Mammary epithelial cell (primary cell): ENCODE measurements at regions of chr9 and their contacts with region 1.

Region 1: GRCh38 chr9:108761655-108762347 is 94.0 kb downstream of the ACTL7B start:
- DNase-seq: peak; percentile 31
- H3K4me3 ChIP-seq: no peak overlapping the region
- H3K27ac ChIP-seq: no peak overlapping the region
- H3K4me1 ChIP-seq: no peaks in the 10 kb centered on the region
- H3K27me3 ChIP-seq: no peaks in the 10 kb centered on the region
- CTCF ChIP-seq: peak; percentile 86 to 95

Region 2: GRCh38 chr9:107465467-107466451 is 1296.0 kb before region 1 on chr9:
- CTCF ChIA-PET with region 1: no interaction called
- dilution Hi-C with region 1: no loop called
- in situ Hi-C with region 1: loop called in 1 of 2 experiments (anchors 25 kb)
- intact Hi-C with region 1: loop called (anchors 2 kb)
- DNase-seq: peak; percentile 50
- H3K4me3 ChIP-seq: peak overlapping the region; percentile 51 to 71 (median 59)
- H3K27ac ChIP-seq: no peak overlapping the region
- H3K4me1 ChIP-seq: peaks cover 11% of the 10 kb centered on the region
- H3K27me3 ChIP-seq: no peaks in the 10 kb centered on the region
- CTCF ChIP-seq: peak; percentile 63 to 83

Region 3: GRCh38 chr9:107484117-107484723 is 1277.6 kb before region 1 on chr9:
- CTCF ChIA-PET with region 1: no interaction called
- dilution Hi-C with region 1: loop called (anchors 5 kb)
- in situ Hi-C with region 1: no loop called
- intact Hi-C with region 1: loop called (anchors 5 kb)
- DNase-seq: peak; percentile 60
- H3K4me3 ChIP-seq: no peak overlapping the region
- H3K27ac ChIP-seq: no peak overlapping the region
- H3K4me1 ChIP-seq: peaks cover 27% of the 10 kb centered on the region
- H3K27me3 ChIP-seq: no peaks in the 10 kb centered on the region
- CTCF ChIP-seq: peak; percentile 34 to 63

Region 4: DNA sequence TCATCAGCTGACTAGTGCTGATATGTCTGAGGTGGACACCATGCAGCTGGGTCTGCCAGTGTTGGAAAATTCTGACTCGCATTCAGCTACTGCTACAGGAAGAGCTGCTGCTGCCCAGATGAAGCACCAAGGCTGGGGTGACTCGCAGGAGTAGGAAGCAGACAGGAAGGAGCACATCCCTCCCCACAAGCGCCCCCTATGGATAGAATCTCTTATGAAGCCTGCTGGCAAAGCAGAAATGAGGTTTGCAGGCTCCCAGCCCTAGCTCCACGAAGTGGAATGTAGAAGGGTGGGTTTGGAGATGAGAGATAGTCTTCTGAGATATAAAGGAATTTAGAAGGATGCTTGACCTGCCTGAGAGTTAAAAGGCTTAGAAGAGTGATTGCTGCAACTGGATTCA is 349.0 kb before region 1 on chr9:
- CTCF ChIA-PET with region 1: interaction called, 3 read pairs
- dilution Hi-C with region 1: no loop called
- in situ Hi-C with region 1: loop called in 1 of 2 experiments (anchors 25 kb)
- intact Hi-C with region 1: loop called (anchors 1 kb)
- DNase-seq: peak; percentile 15
- H3K4me3 ChIP-seq: no peak overlapping the region
- H3K27ac ChIP-seq: no peak overlapping the region
- H3K4me1 ChIP-seq: no peaks in the 10 kb centered on the region
- H3K27me3 ChIP-seq: no peaks in the 10 kb centered on the region
- CTCF ChIP-seq: no peak

Region 5: GRCh38 chr9:108671176-108671575 is 90.6 kb before region 1 on chr9:
- CTCF ChIA-PET with region 1: interaction called, 4 read pairs
- dilution Hi-C with region 1: no loop called
- in situ Hi-C with region 1: no loop called
- intact Hi-C with region 1: loop called (anchors 1 kb)
- DNase-seq: peak; percentile 58
- H3K4me3 ChIP-seq: no peak overlapping the region
- H3K27ac ChIP-seq: peak overlapping the region; percentile 73
- H3K4me1 ChIP-seq: peaks cover 35% of the 10 kb centered on the region
- H3K27me3 ChIP-seq: no peaks in the 10 kb centered on the region
- CTCF ChIP-seq: peak; percentile 68 to 78